H1 (cell line): ENCODE measurements at regions of chr12 and their contacts with region 1.

Region 1: DNA sequence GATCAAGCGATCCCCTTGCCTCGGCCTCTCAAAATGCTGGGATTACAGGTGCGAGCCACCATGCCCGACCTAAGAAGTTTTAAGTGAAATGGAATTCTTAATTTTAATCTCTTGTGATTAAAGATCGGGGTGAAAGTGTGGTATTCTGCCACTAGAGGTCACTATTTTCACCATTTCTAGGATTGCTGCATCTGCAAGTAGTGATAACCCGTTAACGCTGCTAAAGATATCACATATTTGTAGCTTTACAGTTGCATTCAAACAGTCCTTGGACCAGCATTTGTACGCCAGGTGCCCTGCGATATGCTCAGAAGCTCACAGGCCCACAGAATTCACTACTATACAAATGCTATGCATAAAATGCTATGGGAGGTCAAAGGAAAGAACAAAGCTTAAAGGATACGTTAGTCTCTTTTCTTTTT is 19.3 kb downstream of the CCDC62 start:
- DNase-seq: no peak
- H3K4me3 ChIP-seq: no peak overlapping the region
- H3K27ac ChIP-seq: no peak overlapping the region
- H3K4me1 ChIP-seq: peaks cover 0 to 3% (median 0%) of the 10 kb centered on the region in 4 experiments; a peak in 2 of 7 replicates
- H3K27me3 ChIP-seq: no peaks in the 10 kb centered on the region
- CTCF ChIP-seq: peak in 2 of 3 experiments; percentile 45 to 75; a peak in 2 of 4 replicates
- EP300 ChIP-seq: no peak
- POLR2A ChIP-seq: no peak
- RAD21 ChIP-seq: peak; percentile 58 to 64

Region 2: DNA sequence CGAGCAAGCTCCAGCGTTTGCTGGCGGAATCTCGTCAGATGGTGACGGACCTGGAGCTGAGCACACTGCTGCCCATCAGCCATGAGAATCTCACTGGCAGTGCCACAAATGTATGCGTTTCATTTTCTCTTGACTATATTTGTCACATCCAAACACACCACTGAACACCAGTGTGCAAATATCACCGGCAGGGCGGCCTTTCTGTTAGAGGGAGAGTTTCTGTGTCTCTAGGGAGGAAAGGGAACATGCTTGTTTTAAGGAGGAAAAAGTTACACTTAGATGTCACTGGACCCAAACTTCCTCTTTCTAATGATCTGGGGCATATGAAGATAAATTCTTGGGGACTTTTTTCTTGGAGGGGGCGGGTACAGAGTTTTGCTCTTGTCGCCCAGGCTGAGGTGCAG is 19.6 kb after region 1 on chr12:
- CTCF ChIA-PET with region 1: interaction called, 35 read pairs
- POLR2A ChIA-PET with region 1: no interaction called
- DNase-seq: no peak
- H3K4me3 ChIP-seq: no peak overlapping the region
- H3K27ac ChIP-seq: no peak overlapping the region
- H3K4me1 ChIP-seq: no peaks in the 10 kb centered on the region
- H3K27me3 ChIP-seq: no peaks in the 10 kb centered on the region
- CTCF ChIP-seq: no peak
- EP300 ChIP-seq: no peak
- POLR2A ChIP-seq: no peak
- RAD21 ChIP-seq: no peak

Region 3: GRCh38 chr12:122820838-122821271 is 27.2 kb after region 1 on chr12:
- CTCF ChIA-PET with region 1: interaction called, 35 read pairs
- POLR2A ChIA-PET with region 1: no interaction called
- DNase-seq: no peak
- H3K4me3 ChIP-seq: no peak overlapping the region
- H3K27ac ChIP-seq: no peak overlapping the region
- H3K4me1 ChIP-seq: no peaks in the 10 kb centered on the region
- H3K27me3 ChIP-seq: no peaks in the 10 kb centered on the region
- CTCF ChIP-seq: no peak
- EP300 ChIP-seq: no peak
- POLR2A ChIP-seq: no peak
- RAD21 ChIP-seq: no peak

Region 4: GRCh38 chr12:122825773-122826724 is 32.4 kb after region 1 on chr12:
- CTCF ChIA-PET with region 1: interaction called, 28 read pairs
- POLR2A ChIA-PET with region 1: no interaction called
- DNase-seq: no peak
- H3K4me3 ChIP-seq: peak overlapping the region in 2 of 4 experiments; percentile 19 to 42; a peak in 2 of 8 replicates
- H3K27ac ChIP-seq: no peak overlapping the region
- H3K4me1 ChIP-seq: no peaks in the 10 kb centered on the region
- H3K27me3 ChIP-seq: no peaks in the 10 kb centered on the region
- CTCF ChIP-seq: no peak
- EP300 ChIP-seq: no peak
- POLR2A ChIP-seq: no peak
- RAD21 ChIP-seq: no peak

Region 5: GRCh38 chr12:122834104-122834920 is 40.6 kb after region 1 on chr12:
- CTCF ChIA-PET with region 1: interaction called, 29 read pairs
- POLR2A ChIA-PET with region 1: interaction called, 3 read pairs
- DNase-seq: peak in 1 of 2 experiments; percentile 25
- H3K4me3 ChIP-seq: peak overlapping the region; percentile 44 to 61 (median 58); a peak in 7 of 8 replicates
- H3K27ac ChIP-seq: no peak overlapping the region
- H3K4me1 ChIP-seq: peaks cover 0 to 13% (median 0%) of the 10 kb centered on the region in 4 experiments; a peak in 3 of 7 replicates
- H3K27me3 ChIP-seq: peaks cover 2 to 30% (median 22%) of the 10 kb centered on the region in 4 experiments
- CTCF ChIP-seq: peak in 1 of 3 experiments; percentile 19; a peak in 1 of 4 replicates
- EP300 ChIP-seq: no peak
- POLR2A ChIP-seq: no peak
- RAD21 ChIP-seq: no peak; a peak in 1 of 4 replicates

Region 6: DNA sequence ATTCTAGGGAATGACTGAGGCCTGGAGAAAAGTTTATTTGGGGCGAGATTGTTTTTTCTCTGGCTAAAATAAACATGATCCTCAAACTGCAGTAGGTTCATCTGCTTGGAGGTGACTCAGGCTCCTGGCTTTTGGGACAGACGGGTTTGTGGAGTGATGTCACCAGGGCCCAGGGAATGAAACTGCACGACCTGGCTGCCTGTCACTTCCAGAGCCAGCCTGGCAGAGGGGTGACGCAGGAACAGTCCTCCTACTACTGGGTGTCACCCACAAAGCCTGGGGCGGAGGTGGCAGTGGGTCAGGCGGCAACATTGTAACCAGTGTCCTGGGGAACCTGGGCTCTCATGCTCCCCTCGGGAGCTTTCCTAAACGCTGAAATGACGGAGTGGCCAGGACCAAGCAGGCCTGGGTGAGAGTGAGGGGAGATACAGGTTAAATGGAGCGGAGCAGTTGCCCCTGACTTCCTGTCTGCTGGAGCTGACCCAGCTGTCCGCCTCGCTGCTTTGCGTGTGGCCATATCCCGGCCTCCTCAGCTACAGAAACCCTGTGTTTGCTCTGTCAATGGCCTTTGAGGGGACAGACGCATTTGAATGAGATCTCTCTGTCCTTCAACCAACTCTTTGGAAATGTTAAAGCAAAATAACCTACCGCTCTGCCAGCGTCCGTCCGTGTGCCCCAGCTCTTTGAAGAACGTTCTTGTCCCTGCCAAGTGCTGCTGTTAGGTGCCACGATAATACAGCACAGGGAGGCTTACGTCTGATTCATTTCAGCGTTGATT is 48.0 kb after region 1 on chr12:
- CTCF ChIA-PET with region 1: interaction called, 15 read pairs
- POLR2A ChIA-PET with region 1: no interaction called
- DNase-seq: no peak
- H3K4me3 ChIP-seq: no peak overlapping the region
- H3K27ac ChIP-seq: no peak overlapping the region
- H3K4me1 ChIP-seq: peaks cover 3 to 19% (median 10%) of the 10 kb centered on the region in 4 experiments
- H3K27me3 ChIP-seq: peaks cover 0 to 17% (median 11%) of the 10 kb centered on the region in 4 experiments; a peak in 6 of 7 replicates
- CTCF ChIP-seq: no peak
- EP300 ChIP-seq: no peak
- POLR2A ChIP-seq: no peak
- RAD21 ChIP-seq: no peak

Region 7: GRCh38 chr12:122951979-122952892 is 158.5 kb after region 1 on chr12:
- CTCF ChIA-PET with region 1: interaction called, 16 read pairs
- POLR2A ChIA-PET with region 1: no interaction called
- DNase-seq: peak in 1 of 2 experiments; percentile 73
- H3K4me3 ChIP-seq: no peak overlapping the region
- H3K27ac ChIP-seq: no peak overlapping the region
- H3K4me1 ChIP-seq: no peaks in the 10 kb centered on the region
- H3K27me3 ChIP-seq: no peaks in the 10 kb centered on the region
- CTCF ChIP-seq: peak; percentile 94 to 97 (median 95)
- EP300 ChIP-seq: no peak
- POLR2A ChIP-seq: no peak
- RAD21 ChIP-seq: peak; percentile 96 to 98